A549 (cell line): ENCODE measurements at regions of chr1 and their contacts with region 1.

Region 1: DNA sequence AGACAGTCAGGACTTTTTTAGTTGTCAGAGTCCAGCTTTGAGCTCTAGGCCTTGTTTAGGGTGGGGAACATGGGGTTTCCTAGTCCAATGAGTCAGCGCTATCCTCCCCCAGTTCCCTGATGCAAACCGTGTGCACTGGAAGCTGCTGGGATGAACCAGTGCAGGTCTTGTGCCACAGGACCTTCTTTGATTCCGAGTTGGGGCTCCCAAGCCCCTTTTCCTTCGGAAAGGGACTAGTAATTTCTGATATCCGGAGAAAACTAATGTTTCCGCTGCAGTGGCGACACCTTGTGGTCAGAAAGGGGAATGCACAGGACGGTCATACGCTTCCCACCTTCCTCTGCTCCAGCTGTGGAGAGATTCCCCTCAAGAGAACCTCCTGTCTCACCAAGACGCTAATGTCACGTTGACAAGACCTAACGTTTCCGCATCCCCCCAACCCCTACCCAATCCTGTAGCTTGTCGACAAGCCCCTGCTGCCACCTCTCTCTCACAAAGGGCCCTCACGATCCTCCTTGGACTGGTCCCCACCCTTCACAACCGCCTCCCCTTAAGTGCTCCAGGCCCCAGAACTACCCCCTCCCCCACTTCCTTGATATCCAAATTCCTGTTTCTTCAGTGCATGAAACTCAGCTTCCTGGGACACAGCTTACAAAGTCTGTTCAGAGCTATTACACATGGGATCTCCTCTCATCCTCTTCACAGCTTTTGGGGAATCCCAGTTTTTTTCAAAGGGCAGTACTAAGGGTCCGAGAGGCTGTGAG is 30.9 kb downstream of the GPA33 start:
- DNase-seq: peak; percentile 52 to 67
- ATAC-seq: peak in 1 of 2 experiments; percentile 73; a peak in 3 of 6 replicates
- H3K4me3 ChIP-seq: no peak overlapping the region
- H3K27ac ChIP-seq: peak overlapping the region; percentile 51 to 86
- H3K4me1 ChIP-seq: no peaks in the 10 kb centered on the region
- CTCF ChIP-seq: peak; percentile 92
- EP300 ChIP-seq: no peak
- POLR2A ChIP-seq: no peak
- RAD21 ChIP-seq: peak; percentile 78 to 81

Region 2: DNA sequence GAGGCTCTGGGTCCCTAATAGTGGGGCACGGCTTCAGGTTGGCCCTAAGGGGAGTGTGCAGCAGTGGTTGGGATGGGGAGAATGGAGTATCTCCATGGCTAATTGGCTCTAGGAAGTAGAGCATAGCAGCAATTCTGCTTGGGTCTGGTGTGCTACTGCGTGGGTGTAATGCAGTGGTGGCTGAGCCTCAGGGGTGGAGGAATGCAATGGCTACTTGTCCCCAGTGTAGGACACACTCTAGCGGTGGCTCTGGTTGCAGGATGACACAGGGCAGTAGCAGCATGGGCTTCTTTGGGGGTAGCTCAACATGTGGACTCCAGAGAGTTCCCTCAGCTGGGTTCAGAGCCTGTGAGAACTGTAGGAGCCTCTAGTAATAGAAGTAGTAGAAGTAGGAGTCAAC is 801.2 kb before region 1 on chr1:
- CTCF ChIA-PET with region 1: no interaction called
- POLR2A ChIA-PET with region 1: no interaction called
- DNase-seq: no peak
- ATAC-seq: no peak; a peak in 2 of 6 replicates
- H3K4me3 ChIP-seq: no peak overlapping the region
- H3K27ac ChIP-seq: no peak overlapping the region
- H3K4me1 ChIP-seq: no peaks in the 10 kb centered on the region
- CTCF ChIP-seq: no peak
- EP300 ChIP-seq: no peak
- POLR2A ChIP-seq: no peak
- RAD21 ChIP-seq: no peak

Region 3: DNA sequence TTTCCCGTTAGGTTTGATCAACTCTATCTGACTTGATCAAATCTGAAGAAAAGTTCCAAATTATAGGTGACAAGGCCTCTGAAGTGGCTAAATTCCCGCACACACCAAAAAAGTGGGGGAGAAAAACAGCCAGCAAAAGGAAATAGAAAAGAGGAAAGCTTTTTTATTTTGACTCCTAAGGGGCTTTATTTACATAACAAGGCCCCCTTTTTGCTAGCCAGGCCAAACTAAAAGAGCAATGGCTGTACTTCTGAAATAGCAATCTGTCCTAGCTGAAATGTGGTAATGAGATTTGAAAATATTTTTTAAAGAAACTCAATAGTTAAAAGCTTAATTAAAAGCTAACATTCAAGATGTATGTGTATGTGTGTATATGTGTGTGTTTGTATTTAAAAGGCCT is 531.5 kb before region 1 on chr1:
- CTCF ChIA-PET with region 1: no interaction called
- POLR2A ChIA-PET with region 1: no interaction called
- DNase-seq: no peak
- ATAC-seq: no peak
- H3K4me3 ChIP-seq: no peak overlapping the region
- H3K27ac ChIP-seq: no peak overlapping the region
- H3K4me1 ChIP-seq: no peaks in the 10 kb centered on the region
- CTCF ChIP-seq: no peak
- EP300 ChIP-seq: no peak
- POLR2A ChIP-seq: no peak
- RAD21 ChIP-seq: no peak

Region 4: GRCh38 chr1:166920561-166921475 is 138.4 kb before region 1 on chr1:
- CTCF ChIA-PET with region 1: interaction called, 534 read pairs
- POLR2A ChIA-PET with region 1: no interaction called
- DNase-seq: peak in 1 of 2 experiments; percentile 15
- ATAC-seq: peak; percentile 57 to 73
- H3K4me3 ChIP-seq: peak overlapping the region; percentile 37
- H3K27ac ChIP-seq: no peak overlapping the region
- H3K4me1 ChIP-seq: no peaks in the 10 kb centered on the region
- CTCF ChIP-seq: no peak
- EP300 ChIP-seq: no peak
- POLR2A ChIP-seq: no peak
- RAD21 ChIP-seq: no peak

Region 5: DNA sequence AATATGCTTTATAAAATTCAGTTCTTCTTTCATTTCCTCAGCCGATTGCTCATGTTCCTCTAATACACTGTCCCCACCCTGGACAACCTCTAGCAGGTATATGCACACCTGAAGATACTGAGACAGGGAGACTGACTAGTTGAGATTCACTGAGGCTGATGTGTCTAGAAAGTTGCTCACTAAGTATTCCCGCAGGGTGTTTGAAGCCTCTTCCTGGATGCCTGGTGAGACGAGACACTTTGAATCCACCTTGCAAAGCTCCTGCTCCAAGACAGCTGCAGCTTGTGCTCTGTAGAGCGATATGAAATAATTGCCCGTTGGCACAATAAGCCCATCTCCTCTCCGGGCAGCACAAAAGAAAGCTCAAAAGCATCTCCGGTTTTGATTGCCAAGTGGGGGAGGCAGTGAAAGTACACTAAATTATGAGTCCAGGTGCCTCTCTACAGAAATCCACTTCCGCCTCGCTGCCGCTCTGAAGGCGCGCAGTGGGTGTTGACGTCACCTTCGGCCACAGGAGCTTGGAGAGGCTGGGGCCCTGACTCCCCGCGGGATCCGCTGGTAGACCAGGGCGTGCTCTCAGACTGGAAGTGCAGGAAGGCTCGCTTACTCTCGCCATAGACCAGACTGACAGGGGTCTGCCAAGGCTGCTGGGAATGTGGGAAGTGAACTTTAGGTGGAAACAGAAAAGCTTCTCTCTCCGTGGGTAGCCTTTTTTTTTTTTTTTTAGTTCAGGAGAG is 15.3 kb before region 1 on chr1:
- CTCF ChIA-PET with region 1: interaction called, 21 read pairs
- POLR2A ChIA-PET with region 1: no interaction called
- DNase-seq: peak; percentile 40 to 42
- ATAC-seq: peak; percentile 96 to 97
- H3K4me3 ChIP-seq: peak overlapping the region; percentile 36
- H3K27ac ChIP-seq: peak overlapping the region in 1 of 2 experiments; percentile 29; a peak in 2 of 6 replicates
- H3K4me1 ChIP-seq: no peaks in the 10 kb centered on the region
- CTCF ChIP-seq: no peak
- EP300 ChIP-seq: no peak
- POLR2A ChIP-seq: no peak
- RAD21 ChIP-seq: no peak

Region 6: DNA sequence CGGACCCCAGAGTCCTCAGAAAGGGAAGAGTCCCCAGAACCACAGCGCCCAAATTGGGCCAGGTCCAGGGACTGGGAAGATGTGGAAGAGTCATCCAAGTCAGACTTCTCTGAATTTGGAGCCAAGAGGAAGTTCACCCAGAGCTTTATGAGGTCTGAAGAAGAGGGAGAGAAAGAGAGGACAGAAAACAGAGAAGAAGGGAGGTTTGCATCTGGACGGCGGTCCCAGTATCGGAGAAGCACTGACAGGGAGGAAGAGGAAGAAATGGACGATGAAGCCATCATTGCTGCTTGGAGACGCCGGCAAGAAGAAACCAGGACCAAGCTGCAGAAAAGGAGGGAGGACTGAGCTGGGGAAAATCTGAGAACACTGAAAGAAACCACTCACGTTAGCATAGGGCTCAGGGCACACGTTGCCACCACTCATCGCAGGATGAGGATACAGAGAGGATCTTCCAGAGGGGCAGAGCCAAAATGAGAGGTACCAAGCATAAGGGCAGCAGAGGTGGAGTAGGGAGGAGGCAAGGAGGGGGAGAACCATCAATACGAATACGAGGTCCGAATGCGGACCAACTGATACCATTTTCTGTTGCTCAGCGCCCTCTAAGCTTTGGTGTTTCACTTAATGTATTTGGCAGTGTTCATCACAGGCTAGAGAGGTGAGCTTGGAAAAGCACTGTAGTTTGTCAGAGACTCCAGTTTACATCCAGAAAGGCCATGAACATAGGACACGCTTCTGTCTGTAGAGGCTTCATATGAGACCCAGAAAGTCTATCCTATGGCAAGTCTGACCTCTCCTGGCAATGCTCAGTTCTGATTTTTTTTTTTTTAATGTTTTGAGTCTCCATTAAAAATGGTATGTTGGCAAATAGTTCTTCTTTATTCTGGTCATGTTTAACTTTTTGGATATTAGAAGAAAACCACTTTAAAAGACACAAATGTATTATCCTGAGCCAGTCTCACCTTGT is 69.3 kb after region 1 on chr1:
- CTCF ChIA-PET with region 1: interaction called, 24 read pairs
- POLR2A ChIA-PET with region 1: no interaction called
- DNase-seq: no peak
- ATAC-seq: peak in 1 of 2 experiments; percentile 35; a peak in 1 of 6 replicates
- H3K4me3 ChIP-seq: no peak overlapping the region
- H3K27ac ChIP-seq: no peak overlapping the region
- H3K4me1 ChIP-seq: no peaks in the 10 kb centered on the region
- CTCF ChIP-seq: peak; percentile 33; the same call in 2 of the 3 replicates
- EP300 ChIP-seq: no peak
- POLR2A ChIP-seq: no peak
- RAD21 ChIP-seq: peak; percentile 39 to 46; a peak in 4 of 5 replicates